Cardiac septum (tissue), 1 donor: ENCODE measurements at regions of chr3 and their contacts with region 1.

Region 1: DNA sequence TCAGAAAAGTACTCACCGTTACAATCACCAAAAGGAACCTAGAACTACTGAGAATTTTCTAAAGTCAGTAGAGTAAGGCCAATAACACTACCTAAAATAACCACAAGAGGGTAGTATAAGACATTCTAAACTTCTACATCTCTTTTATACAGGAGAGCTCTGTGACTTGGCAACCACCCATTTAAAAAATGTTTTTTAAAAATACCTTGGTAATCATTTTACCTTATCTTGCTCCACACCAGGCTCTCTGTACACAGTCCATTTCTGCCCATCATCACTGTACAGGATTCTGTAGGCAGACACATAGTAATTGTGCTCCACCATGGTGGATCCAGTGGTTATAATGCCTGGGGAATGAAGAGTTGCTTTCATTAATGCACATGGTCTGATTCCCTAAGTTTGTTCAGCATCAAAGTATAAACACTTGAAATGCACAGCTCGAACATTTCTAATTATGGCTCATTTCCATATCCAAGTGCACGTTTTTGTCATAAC is 54.5 kb downstream of the ST3GAL6 start:
- DNase-seq: no peak

Region 2: DNA sequence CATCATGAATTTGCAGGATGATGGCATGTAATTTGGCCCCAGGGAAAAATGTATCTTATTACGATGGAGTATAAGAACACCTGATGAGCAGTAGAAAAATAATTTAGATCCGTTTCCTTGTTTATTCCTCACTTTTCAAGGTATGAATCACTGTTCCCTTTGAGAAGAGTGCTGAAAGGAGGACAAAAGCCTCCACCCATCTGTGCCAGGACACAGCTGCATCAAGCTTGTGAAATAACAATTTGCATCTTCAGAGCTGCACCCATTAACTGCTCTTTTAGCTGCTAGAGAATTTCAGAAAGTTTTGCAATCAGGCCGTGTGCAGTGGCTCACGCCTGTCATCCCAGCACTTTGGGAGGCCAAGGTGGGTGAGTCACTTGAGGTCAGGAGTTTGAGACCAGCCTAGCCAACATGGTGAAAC is 304.5 kb before region 1 on chr3:
- intact Hi-C with region 1: loop called (anchors 10 kb)
- DNase-seq: no peak

Region 3: DNA sequence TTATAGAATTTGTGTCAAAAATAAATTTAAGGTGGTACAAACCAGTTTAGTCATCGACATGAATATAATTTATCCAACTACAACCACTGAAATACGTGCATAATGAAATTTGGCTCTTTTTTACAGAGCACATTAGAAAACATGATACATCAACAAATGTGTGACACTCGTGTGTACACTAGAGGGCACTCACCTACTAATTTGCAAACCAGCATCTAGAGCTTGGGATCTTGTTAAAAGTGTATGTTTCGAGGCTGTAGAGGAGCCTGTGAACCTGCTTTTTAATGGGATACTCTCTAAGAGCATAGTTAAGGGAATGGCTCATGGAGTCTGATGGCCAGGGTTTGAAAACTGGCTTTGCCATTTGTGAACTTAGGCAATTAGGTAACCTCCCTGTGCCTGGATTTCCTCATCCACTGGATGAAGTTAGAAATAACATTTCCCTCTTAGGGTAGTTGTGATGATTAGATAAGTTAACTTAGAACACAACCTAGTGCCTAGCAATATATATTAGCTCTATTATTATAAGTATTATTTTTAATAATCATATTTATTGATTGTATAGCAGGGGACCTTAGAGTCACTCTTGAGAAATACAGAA is 215.4 kb before region 1 on chr3:
- intact Hi-C with region 1: loop called (anchors 2 kb)
- DNase-seq: no peak

Region 4: DNA sequence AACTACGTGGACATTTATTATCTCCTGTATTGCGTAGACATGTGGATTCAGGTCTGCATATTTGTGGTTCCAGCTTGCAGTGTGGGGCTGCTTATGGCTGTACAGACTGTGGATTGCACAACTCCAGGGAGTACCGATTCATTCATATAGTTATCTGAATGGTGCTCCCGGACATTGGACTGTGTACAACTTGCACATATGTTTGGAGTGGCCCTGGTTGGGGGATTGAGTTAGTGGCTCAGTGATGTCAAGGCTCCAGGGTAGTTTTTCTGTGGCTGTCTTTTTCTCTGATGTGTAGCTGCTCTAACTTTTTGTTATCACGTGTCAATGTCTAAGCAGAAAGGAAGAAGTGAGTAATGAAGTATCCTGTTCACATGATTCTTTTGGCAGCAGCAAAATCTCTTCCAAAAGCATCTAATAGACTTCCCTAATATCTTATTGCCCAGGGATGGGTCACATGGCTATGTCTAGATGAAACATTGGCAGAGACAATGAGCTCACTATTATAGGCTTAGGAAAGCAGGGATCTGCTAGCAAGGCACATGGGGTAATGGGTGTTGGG is 38.7 kb before region 1 on chr3:
- intact Hi-C with region 1: no loop called
- DNase-seq: no peak

Region 5: GRCh38 chr3:98901392-98902350 is 84.1 kb after region 1 on chr3 and contains the start of gene DCBLD2:
- intact Hi-C with region 1: loop called (anchors 5 kb)
- DNase-seq: peak; percentile 98
- total RNA-seq, gene DCBLD2: 67.7 TPM

Region 6: DNA sequence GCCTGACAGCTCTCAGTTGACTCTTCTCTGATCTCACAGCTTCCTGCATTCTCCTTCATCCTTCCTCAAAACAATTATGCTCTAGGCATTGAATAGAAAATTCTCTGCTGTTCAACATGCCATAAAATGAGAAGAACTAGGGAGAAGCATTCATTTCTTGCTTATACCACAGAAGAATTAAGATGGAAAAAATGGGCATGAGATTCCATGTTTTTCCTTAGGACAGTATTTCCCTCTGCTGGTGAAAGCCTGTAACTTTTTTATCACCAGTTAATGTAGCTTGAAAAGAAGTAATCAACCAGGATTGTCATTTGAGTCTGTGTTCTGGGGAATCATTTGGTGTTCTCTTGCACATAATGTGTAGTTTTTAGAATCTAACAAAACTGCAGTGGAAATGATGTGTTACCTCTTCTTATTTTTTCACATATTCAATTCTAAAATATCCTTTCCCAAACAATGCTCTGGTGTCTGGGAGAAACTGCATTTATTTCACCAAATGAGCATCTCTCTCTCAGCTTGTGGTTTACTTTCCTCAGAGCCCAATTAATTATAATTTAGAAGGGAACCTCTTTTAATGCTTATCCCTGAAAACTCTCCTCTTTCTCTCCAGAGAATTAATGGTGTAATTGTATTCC is 176.7 kb after region 1 on chr3:
- intact Hi-C with region 1: loop called (anchors 1 kb)
- DNase-seq: no peak

Region 7: DNA sequence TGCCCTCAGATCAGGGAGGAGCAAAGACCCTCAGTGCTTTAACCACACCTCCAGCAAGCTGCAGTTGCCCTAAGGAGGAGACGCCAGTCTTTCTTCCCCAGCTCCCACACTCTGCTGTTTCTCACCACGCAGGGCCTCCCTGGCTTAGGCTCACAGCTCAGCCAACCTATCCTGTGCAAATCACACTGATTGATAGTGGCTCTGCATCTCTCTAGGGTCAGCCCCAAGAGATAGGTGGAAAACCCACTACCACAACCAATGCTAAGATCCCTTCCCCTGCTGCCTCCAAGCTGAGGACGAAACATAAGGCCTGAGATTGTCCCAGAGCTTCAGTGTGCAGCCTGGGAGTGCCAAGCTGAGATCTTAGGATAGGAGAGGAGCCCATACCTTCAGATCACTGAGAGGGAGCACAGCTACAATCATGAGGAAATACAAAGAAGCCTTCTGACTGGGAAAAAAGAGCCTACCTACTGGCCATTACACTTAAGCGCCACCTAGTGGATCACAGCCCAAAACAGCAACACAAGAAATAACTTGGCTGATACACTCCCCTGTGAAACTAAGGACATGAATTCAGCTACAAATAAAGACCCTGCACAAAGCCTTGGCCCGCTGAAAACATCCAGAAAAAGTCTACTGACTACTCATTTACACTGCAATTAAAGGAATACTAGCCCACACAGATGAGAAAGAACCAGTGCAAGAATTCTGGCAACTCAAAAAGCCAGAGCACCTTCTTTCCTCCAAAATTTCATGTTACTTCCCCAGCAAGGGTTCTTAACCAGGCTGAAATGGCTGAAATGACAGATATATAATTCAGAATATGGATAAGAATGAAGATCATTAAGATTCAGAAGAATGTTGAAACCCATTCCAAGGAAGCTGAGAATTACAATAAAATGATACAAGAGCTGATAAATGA is 355.4 kb after region 1 on chr3:
- intact Hi-C with region 1: loop called (anchors 10 kb)
- DNase-seq: no peak